Activated naive CD4-positive, alpha-beta T cell treated with anti-CD3 and anti-CD28 coated beads, Interleukin-2, amount 10 ng/mL, durations not matched to agents 7 days and 5 days (primary cell): ENCODE measurements at regions of chr3 and their contacts with region 1.

Region 1: GRCh38 chr3:71069797-71070196 is 513.7 kb downstream of the FOXP1 start:
- DNase-seq: peak; percentile 82
- H3K4me3 Mint-ChIP-seq: no peak overlapping the region
- H3K27ac Mint-ChIP-seq: no peak overlapping the region
- H3K4me1 Mint-ChIP-seq: peaks cover 67% of the 10 kb centered on the region
- H3K27me3 Mint-ChIP-seq: no peaks in the 10 kb centered on the region

Region 2: GRCh38 chr3:70550723-70551319 is 519.0 kb before region 1 on chr3:
- CTCF ChIA-PET with region 1: interaction called, 22 read pairs
- DNase-seq: peak; percentile 79
- H3K4me3 Mint-ChIP-seq: no peak overlapping the region
- H3K27ac Mint-ChIP-seq: no peak overlapping the region
- H3K4me1 Mint-ChIP-seq: no peaks in the 10 kb centered on the region
- H3K27me3 Mint-ChIP-seq: peaks cover 13% of the 10 kb centered on the region

Region 3: DNA sequence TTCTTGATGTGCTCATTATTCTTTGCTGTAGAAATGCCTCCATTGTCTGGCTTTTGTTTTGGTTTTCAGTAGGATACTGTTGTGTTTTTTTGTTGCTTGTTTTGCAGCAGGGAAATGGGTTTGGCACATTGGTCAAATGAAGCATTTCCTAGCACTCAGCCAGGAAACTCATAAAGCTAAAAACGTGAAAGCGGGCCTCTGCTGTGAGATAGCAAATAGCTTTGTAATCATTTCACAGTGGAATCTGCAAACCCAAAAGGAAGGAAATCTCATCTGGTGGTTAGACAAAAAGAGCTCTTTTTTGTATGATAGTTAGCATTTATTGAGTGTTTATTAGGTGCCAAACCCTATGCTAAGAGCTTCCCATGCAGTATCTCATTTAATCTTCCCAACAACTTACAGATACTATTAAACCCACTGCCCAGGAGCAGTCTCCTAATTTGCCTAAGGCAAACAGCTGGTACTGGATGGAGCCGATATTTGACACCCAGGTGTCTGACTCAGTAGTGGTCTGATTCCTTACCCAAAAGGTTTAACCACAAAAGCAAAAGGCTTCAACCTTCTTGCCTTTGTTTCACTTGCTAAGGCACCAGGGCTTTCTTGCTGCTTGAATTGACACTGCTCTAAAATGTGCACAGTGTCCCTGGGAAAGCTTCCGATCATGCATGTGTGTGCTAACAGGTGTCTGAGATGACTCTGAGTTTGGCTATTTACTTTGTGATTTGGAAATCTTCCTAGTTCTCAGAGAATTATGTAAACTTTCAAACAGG is 229.5 kb before region 1 on chr3:
- CTCF ChIA-PET with region 1: no interaction called
- DNase-seq: no peak
- H3K4me3 Mint-ChIP-seq: no peak overlapping the region
- H3K27ac Mint-ChIP-seq: peak overlapping the region; percentile 7
- H3K4me1 Mint-ChIP-seq: peaks cover 7% of the 10 kb centered on the region
- H3K27me3 Mint-ChIP-seq: peaks cover 3% of the 10 kb centered on the region

Region 4: DNA sequence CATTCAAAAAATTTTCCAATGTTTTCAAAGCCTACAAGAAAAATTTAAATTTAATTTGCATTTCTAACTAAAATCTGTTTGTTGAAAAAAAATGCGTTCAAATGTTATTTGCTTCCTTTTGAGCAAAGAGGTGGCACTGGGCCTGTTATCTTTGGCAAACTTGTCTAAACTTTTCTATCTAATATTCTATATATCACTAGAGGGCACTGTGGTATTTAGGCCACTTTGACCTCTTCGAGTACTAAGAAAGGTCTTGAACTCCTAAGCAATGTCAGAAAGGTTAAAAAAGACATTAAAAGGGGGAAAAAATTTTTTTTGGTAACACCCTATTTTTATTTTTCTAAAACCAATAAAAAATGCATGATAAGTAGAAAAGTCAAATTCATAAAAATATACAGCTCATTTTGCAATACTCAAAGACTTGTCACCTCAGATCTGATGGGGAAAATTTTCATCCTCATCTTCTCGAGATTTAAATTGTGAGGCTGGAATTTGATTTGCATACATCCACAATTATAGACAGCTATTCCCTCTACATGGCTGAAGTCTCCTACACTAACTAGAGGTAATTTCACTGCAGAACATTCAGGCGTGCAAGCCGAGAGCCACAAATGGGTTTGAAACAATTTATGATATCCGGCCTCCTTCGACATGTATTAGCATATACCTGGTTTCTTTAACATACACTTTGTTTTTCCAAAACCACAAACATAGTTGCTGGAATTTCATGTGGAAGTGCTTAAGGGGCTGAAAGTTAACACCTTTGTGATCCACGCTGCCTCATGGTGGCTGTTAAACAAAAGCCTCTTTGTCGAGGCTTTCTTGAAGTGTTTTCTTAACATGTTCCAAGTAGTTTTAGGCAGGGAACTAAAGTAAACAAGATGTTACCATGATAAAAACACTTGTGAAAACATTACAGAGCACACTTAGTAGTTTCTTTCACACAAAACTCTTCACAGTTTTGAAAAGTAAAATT is 62.7 kb before region 1 on chr3:
- CTCF ChIA-PET with region 1: interaction called, 25 read pairs
- DNase-seq: no peak
- H3K4me3 Mint-ChIP-seq: no peak overlapping the region
- H3K27ac Mint-ChIP-seq: peak overlapping the region; percentile 78
- H3K4me1 Mint-ChIP-seq: peaks cover 63% of the 10 kb centered on the region
- H3K27me3 Mint-ChIP-seq: no peaks in the 10 kb centered on the region